Right cardiac atrium (tissue), 5 donors: ENCODE measurements at regions of chr7 and their contacts with region 1.

Region 1: DNA sequence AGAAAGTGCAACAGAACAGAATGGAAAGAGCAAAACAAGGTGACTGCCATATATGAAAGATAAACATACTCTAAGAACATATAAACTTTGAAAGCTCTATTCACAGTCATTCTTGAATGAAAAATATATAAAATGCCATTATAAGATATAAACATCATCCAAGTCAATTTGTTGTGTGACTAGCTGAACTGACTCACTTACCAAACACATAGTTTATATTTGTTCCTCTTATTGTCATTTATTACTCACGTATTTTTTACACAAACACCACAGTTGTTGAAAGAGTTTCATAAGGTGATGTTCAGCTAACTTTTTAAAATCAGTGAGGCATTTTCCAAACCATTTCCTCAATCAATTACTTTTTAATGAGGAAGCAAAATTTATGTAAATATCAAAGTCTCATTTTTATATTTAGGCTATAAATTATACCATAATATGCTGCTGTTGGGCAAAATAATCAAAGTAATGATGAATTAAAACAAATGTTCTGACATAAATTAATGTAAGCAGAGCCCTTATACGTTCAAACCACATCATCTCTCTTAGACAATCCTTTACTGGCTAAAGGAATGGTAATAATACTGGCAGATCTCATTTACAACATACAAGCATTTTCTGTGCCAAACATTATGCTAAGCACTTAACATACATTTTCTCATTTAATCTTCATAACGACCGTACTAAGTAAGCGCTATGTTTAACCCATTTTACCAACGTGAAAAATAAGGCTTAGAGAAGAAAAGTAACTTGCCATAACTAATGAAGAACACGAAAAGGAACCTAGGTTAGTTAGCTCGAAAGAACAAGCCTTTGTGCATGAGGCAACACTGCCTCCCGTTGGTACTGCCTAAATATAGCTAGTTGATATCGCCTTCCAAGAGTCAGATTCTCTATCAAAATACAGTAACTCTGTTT is 7.3 kb downstream of the LRRN3 start:
- DNase-seq: peak in 2 of 3 donors; percentile 22 to 56
- ATAC-seq: peak; percentile 66 to 86
- H3K4me3 ChIP-seq: no peak overlapping the region
- H3K27ac ChIP-seq: no peak overlapping the region
- H3K4me1 ChIP-seq: peaks cover 3% of the 10 kb centered on the region
- H3K27me3 ChIP-seq: no peaks in the 10 kb centered on the region

Region 2: DNA sequence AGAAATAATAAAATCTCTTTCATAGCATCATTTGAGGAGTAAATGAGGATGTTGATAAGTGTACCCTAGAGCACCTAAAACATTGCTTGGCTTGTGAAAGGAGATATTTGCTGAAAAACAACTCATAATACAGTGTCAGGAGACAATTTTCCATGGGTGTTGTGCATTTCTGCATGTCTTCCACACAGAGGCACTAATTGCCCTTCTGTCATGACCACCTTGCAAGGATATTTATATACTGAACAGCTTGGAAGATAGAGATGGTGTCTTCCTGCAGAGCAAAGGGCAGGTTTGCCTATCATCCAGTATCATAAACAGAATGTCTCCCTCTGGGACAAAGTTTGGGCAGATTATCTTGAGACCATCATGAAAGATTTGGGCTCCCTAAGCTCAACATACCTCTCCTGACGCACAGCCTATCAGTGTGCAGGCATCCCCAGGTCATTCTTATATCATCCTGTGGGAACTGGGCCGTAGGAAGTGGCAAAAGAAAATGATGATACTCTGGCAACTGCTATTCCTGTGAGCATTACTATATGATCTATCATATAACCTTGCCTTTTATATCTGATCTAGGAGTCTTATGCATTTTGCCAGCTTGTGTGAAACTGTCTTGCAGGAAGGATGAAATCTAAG is 502.5 kb before region 1 on chr7:
- intact Hi-C with region 1: loop called in 1 of 4 experiments (anchors 10 kb)
- DNase-seq: no peak
- ATAC-seq: peak in 1 of 2 donors; percentile 43
- H3K4me3 ChIP-seq: no peak overlapping the region
- H3K27ac ChIP-seq: no peak overlapping the region
- H3K4me1 ChIP-seq: no peaks in the 10 kb centered on the region
- H3K27me3 ChIP-seq: no peaks in the 10 kb centered on the region

Region 3: DNA sequence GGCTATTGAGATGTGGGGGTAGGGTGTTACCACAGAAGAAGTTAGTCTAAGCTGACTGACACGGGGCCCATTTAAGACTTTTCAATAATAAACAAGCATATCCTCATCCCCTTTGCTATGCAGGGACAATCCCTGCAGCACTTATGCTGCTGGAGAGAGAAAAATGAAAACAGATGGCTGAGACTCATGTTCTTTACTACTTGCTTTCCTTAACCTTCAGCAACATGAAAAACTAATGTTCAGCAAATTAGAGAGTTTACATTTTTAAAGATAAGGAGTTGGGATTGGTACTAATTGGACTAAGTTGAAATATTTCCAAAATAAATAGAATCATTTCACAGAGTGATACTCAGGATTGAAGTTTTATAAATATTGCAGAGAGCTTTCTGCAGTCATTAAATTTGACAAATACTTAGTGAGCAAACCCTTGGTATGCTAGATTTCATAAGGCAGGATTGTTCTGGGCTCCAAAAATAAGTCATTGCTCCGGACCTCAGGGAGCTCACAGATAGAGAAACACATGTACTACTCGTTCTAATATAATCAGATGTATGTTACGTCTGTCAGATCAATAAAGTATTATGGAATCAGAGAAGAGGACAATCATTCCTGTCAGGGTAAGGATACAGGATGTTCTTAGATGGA is 154.4 kb before region 1 on chr7:
- intact Hi-C with region 1: no loop called
- DNase-seq: no peak
- ATAC-seq: no peak
- H3K4me3 ChIP-seq: no peak overlapping the region
- H3K27ac ChIP-seq: no peak overlapping the region
- H3K4me1 ChIP-seq: peaks cover 1% of the 10 kb centered on the region
- H3K27me3 ChIP-seq: no peaks in the 10 kb centered on the region

Region 4: DNA sequence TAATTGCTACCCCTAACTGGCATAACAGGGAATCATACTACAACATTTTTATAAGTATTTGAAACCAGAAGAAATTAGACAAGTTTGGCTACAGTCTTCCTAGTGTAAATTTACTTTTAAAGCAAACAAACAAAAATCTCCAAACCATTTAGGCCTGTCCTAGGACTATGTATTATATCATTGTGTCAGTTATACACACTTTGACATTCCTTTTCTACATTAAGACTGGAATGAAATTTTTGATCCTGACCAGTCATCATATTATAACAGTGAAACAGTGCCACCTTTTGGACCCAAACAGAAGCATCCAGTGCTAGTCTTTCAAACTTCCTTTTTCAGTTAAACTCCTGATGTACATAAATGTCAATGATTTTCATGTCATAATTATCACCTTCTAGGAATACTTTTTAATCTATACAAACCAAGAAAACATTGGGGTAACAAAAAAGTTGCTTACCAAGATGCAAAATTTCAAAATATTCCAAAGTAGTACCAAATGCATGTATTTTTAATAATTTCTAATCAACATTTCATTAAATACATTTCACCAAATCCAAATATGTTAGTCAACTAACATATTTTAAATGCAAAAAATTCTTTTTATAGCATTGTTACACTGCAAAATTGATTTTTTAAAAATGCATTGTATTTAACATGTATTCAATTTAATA is 388.3 kb after region 1 on chr7:
- intact Hi-C with region 1: loop called in 2 of 4 experiments (anchors 10 kb)
- DNase-seq: no peak
- ATAC-seq: peak; percentile 62 to 67
- H3K4me3 ChIP-seq: no peak overlapping the region
- H3K27ac ChIP-seq: no peak overlapping the region
- H3K4me1 ChIP-seq: no peaks in the 10 kb centered on the region
- H3K27me3 ChIP-seq: no peaks in the 10 kb centered on the region